Vagina (tissue), 2 donors: ENCODE measurements at regions of chr10 and their contacts with region 1.

Region 1: GRCh38 chr10:22988581-22989360 is 60.9 kb downstream of the ARMC3 start:
- DNase-seq: no peak
- H3K4me3 ChIP-seq: no peak overlapping the region
- H3K27ac ChIP-seq: no peak overlapping the region
- H3K4me1 ChIP-seq: no peaks in the 10 kb centered on the region
- H3K27me3 ChIP-seq: no peaks in the 10 kb centered on the region
- CTCF ChIP-seq: peak; percentile 83 to 92 (median 87)
- POLR2A ChIP-seq: no peak

Region 2: DNA sequence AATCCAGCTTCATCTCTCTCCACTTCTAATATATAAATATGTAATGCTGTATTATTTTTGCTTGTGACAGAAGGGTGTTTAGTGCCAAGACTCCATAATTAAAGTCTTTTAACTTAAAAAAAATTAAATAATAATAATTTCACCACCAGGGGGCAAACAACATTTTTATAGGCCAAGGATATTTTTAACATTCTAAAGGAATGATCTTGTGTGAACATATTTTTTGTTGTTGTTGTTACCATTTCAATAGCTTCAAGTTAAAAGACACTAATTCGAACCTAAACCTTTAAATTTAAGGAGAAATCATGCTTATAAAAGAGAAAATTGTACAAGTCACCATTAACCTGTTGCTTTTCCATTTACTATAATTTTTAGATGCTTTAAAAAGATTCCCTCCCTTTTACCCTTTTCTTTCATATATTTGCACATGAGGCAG is 977.8 kb before region 1 on chr10:
- intact Hi-C with region 1: loop called (anchors 5 kb)
- DNase-seq: no peak
- H3K4me3 ChIP-seq: no peak overlapping the region
- H3K27ac ChIP-seq: no peak overlapping the region
- H3K4me1 ChIP-seq: no peaks in the 10 kb centered on the region
- H3K27me3 ChIP-seq: no peaks in the 10 kb centered on the region
- CTCF ChIP-seq: peak; percentile 10 to 46 (median 32)
- POLR2A ChIP-seq: no peak

Region 3: GRCh38 chr10:22560913-22561239 is 427.9 kb before region 1 on chr10:
- intact Hi-C with region 1: loop called (anchors 10 kb)
- DNase-seq: no peak
- H3K4me3 ChIP-seq: no peak overlapping the region
- H3K27ac ChIP-seq: no peak overlapping the region
- H3K4me1 ChIP-seq: no peaks in the 10 kb centered on the region
- H3K27me3 ChIP-seq: no peaks in the 10 kb centered on the region
- CTCF ChIP-seq: no peak
- POLR2A ChIP-seq: no peak

Region 4: DNA sequence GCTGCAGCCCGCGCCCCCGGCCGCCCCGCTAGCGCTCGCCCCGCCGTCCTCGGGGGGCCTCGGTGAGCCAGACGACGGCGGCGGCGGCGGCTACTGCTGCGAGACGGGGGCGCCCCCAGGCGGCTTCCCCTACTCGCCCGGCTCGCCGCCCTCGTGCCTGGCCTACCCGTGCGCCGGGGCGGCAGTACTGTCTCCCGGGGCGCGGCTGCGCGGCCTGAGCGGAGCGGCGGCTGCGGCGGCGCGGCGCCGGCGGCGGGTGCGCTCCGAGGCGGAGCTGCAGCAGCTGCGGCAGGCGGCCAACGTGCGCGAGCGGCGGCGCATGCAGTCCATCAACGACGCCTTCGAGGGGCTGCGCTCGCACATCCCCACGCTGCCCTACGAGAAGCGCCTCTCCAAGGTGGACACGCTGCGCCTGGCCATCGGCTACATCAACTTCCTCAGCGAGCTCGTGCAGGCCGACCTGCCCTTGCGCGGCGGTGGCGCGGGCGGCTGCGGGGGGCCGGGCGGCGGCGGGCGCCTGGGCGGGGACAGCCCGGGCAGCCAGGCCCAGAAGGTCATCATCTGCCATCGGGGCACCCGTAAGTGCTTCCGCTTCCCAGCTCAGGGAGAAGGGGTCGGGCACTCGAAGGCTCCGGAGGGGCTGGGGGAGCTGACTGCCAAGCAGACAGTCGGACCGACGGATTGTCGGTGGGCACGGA is 204.1 kb after region 1 on chr10:
- intact Hi-C with region 1: no loop called
- DNase-seq: peak in 1 of 2 donors; percentile 77
- H3K4me3 ChIP-seq: no peak overlapping the region
- H3K27ac ChIP-seq: no peak overlapping the region
- H3K4me1 ChIP-seq: no peaks in the 10 kb centered on the region
- H3K27me3 ChIP-seq: no peaks in the 10 kb centered on the region
- CTCF ChIP-seq: no peak
- POLR2A ChIP-seq: no peak